ENCODE measurements at regions of chr6 and their contacts with region 1.

Region 1: GRCh38 chr6:109073344-109074132 is 21.1 kb downstream of the SESN1 start:
- DNase-seq: peak; percentile 58
- H3K4me3 ChIP-seq: no peak overlapping the region
- H3K27ac ChIP-seq: no peak overlapping the region
- H3K4me1 ChIP-seq: no peaks in the 10 kb centered on the region
- H3K27me3 ChIP-seq: no peaks in the 10 kb centered on the region
- CTCF ChIP-seq: peak; percentile 54

Region 2: GRCh38 chr6:108896111-108896661 is 177.4 kb before region 1 on chr6:
- intact Hi-C with region 1: loop called (anchors 5 kb)
- DNase-seq: no peak
- H3K4me3 ChIP-seq: no peak overlapping the region
- H3K27ac ChIP-seq: no peak overlapping the region
- H3K4me1 ChIP-seq: peaks cover 2% of the 10 kb centered on the region
- H3K27me3 ChIP-seq: no peaks in the 10 kb centered on the region
- CTCF ChIP-seq: no peak